Heart right ventricle (tissue), 16 donors: ENCODE measurements at regions of chr19 and their contacts with region 1.

Region 1: GRCh38 chr19:41883821-41884733 is 1.1 kb downstream of the ARHGEF1 start:
- DNase-seq: peak; percentile 94 to 95
- ATAC-seq: peak; percentile 96 to 98 (median 98)
- H3K4me3 ChIP-seq: peak overlapping the region; percentile 79 to 99 (median 96)
- H3K27ac ChIP-seq: peak overlapping the region; percentile 89 to 99 (median 94)
- H3K4me1 ChIP-seq: peaks cover 9 to 59% (median 37%) of the 10 kb centered on the region in 9 donors
- H3K27me3 ChIP-seq: no peaks in the 10 kb centered on the region
- CTCF ChIP-seq: peak in 5 of 9 donors; percentile 14 to 53 (median 43)

Region 2: DNA sequence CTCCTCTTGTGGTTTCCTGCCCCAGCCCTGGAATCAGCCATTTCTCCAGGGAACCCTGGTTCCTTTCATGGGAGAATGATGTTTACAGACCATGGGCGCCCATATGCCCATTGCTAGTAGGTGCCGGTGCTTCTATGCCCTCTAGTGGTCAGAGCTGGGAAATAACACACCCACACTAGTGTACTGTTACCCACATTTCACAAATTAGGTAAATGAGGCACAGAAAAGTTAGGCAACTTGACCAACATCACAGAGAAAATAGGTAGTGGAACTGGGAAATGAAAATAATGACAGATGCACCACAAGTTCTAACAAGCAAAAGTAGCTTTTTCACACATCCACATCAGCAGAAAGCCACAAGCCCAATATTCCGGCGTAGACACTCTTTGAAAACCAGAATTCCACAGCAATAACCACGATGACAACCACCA is 89.0 kb before region 1 on chr19:
- intact Hi-C with region 1: no loop called
- DNase-seq: peak in 1 of 2 donors; percentile 18
- ATAC-seq: peak in 6 of 8 donors; percentile 46 to 65 (median 63)
- H3K4me3 ChIP-seq: no peak overlapping the region
- H3K27ac ChIP-seq: peak overlapping the region in 1 of 10 donors; percentile 89
- H3K4me1 ChIP-seq: peaks cover 0 to 33% (median 0%) of the 10 kb centered on the region in 9 donors
- H3K27me3 ChIP-seq: peaks cover 0 to 85% (median 56%) of the 10 kb centered on the region in 7 donors
- CTCF ChIP-seq: peak; percentile 37 to 84 (median 70)

Region 3: DNA sequence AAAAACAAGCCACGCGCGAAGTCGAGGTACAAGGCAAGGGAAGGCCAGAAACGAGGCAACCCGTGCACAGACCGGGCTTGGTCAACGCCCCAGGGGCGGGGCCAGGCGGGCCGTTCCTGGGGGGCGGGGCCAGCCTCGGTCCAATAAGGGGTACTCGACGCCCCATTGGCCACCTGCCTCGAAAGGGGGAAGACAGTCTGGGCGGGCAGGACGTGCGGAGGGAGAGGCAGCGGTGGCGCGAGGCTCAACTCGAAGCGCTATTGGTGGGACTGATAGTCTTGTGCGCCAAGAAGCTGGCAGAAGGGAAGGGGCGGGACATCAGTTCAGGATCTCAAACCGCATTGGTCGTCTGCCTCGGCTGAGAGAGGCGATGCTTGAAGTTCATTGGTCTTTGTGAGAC is 39.5 kb before region 1 on chr19 and contains the start of gene LYPD4:
- intact Hi-C with region 1: no loop called
- DNase-seq: no peak
- ATAC-seq: no peak
- H3K4me3 ChIP-seq: no peak within 1 kb of the TSS
- H3K27ac ChIP-seq: no peak within 1 kb of the TSS
- H3K4me1 ChIP-seq: no peaks in the 10 kb centered on the region
- H3K27me3 ChIP-seq: peaks cover 0 to 37% (median 18%) of the 10 kb centered on the region in 7 donors
- CTCF ChIP-seq: no peak
- total RNA-seq, gene LYPD4: not detected

Region 4: DNA sequence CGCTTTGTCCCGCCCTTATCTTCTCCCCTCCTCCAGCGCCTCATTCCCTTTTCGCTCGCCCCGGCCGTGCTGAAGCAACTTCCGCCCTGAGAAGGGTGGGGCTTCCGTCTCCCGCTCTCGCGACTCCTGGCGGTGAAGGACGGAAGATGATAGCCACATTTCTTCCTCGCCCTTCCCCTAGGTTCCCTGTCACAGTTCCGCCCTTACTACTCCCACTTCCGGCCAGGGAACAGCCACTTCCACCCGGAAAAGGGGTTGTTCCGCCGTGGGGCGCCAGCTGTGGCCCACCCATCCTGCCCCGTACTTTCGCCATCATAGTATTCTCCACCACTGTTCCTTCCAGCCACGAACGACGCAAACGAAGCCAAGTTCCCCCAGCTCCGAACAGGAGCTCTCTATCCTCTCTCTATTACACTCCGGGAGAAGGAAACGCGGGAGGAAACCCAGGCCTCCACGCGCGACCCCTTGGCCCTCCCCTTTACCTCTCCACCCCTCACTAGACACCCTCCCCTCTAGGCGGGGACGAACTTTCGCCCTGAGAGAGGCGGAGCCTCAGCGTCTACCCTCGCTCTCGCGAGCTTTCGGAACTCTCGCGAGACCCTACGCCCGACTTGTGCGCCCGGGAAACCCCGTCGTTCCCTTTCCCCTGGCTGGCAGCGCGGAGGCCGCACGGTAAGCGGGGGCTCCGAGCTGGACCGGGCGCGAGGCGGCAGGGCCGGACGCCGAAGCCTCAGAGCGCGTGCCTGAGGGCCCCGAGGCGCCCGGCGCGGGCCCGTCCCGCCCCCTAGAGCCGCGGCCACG is 24.3 kb before region 1 on chr19 and contains the start of gene RPS19:
- intact Hi-C with region 1: loop called in 3 of 10 experiments (anchors 1 to 2 kb)
- DNase-seq: peak; percentile 99
- ATAC-seq: peak; percentile 93 to 98 (median 97)
- H3K4me3 ChIP-seq: peak within 1 kb of the TSS; percentile 48 to 98 (median 82)
- H3K27ac ChIP-seq: peak within 1 kb of the TSS; percentile 87 to 99 (median 96)
- H3K4me1 ChIP-seq: peaks cover 7 to 48% (median 30%) of the 10 kb centered on the region in 9 donors
- H3K27me3 ChIP-seq: peaks cover 0 to 4% (median 0%) of the 10 kb centered on the region in 7 donors
- CTCF ChIP-seq: peak; percentile 39 to 74 (median 68)
- total RNA-seq, gene RPS19: 446 to 1,030 (median 578) TPM

Region 5: DNA sequence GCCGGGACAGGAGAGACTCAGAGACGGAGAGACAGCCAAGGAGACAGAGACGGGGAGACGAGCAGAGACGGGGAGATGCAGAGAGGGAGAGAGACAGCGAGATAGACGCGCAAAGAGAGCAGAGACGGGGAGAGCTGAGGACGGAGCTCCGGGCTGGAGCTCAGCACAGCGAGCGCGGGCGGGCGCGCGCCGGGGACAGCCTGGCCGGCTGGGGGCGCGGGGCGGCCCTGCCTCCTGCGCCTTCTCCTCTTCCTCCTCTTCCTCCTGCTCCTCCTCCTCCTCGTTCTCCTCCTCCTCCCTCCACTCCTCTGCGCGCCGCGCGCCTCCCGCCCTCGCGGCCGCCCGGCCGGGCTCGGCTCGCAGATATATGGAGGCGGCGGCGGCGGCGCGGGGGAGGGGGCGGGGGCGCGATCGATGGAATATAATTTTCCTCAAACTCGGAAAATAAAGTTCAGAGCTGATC is 44.2 kb after region 1 on chr19 and contains the start of gene ERFL:
- intact Hi-C with region 1: loop called in 4 of 10 experiments (anchors 5 to 10 kb)
- DNase-seq: no peak
- ATAC-seq: peak in 2 of 8 donors; percentile 5 to 10
- H3K4me3 ChIP-seq: peak within 1 kb of the TSS; percentile 11 to 55 (median 46)
- H3K27ac ChIP-seq: no peak within 1 kb of the TSS
- H3K4me1 ChIP-seq: peaks cover 2 to 18% (median 16%) of the 10 kb centered on the region in 9 donors
- H3K27me3 ChIP-seq: peaks cover 41 to 97% (median 96%) of the 10 kb centered on the region in 7 donors
- CTCF ChIP-seq: no peak
- total RNA-seq, gene ERFL: 0.12 to 0.17 (median 0.13) TPM in 3 of 10 donors, not detected in the others

Region 6: GRCh38 chr19:41934849-41935374 is 50.8 kb after region 1 on chr19:
- intact Hi-C with region 1: loop called in 4 of 10 experiments (anchors 5 to 10 kb)
- DNase-seq: peak; percentile 63 to 76
- ATAC-seq: peak; percentile 48 to 85 (median 74)
- H3K4me3 ChIP-seq: no peak overlapping the region
- H3K27ac ChIP-seq: no peak overlapping the region
- H3K4me1 ChIP-seq: peaks cover 0 to 9% (median 2%) of the 10 kb centered on the region in 9 donors
- H3K27me3 ChIP-seq: peaks cover 13 to 84% (median 74%) of the 10 kb centered on the region in 7 donors
- CTCF ChIP-seq: peak; percentile 70 to 87 (median 81)

Region 7: GRCh38 chr19:41959056-41960053 is 75.3 kb after region 1 on chr19 and contains the start of gene RABAC1:
- intact Hi-C with region 1: loop called in 2 of 10 experiments (anchors 5 kb)
- DNase-seq: peak; percentile 88 to 93
- ATAC-seq: peak; percentile 89 to 95 (median 94)
- H3K4me3 ChIP-seq: peak within 1 kb of the TSS; percentile 57 to 100 (median 96)
- H3K27ac ChIP-seq: peak within 1 kb of the TSS; percentile 66 to 94 (median 89)
- H3K4me1 ChIP-seq: peaks cover 6 to 34% (median 21%) of the 10 kb centered on the region in 9 donors
- H3K27me3 ChIP-seq: no peaks in the 10 kb centered on the region
- CTCF ChIP-seq: peak in 3 of 9 donors; percentile 8 to 30 (median 22)
- total RNA-seq, gene RABAC1: 34.5 to 117 (median 46.9) TPM